HepG2 (cell line): ENCODE measurements at regions of chr1 and their contacts with region 1.

Region 1: GRCh38 chr1:161021165-161021960 is 411 bp upstream of the F11R start:
- DNase-seq: peak; percentile 88
- ATAC-seq: peak; percentile 91
- H3K4me3 ChIP-seq: peak overlapping the region; percentile 64 to 87 (median 84)
- H3K27ac ChIP-seq: peak overlapping the region; percentile 75
- H3K4me1 ChIP-seq: peaks cover 51% of the 10 kb centered on the region
- H3K27me3 ChIP-seq: no peaks in the 10 kb centered on the region; a peak in 1 of 5 replicates
- CTCF ChIP-seq: no peak
- EP300 ChIP-seq: no peak
- POLR2A ChIP-seq: peak; percentile 54 to 79
- RAD21 ChIP-seq: no peak

Region 2: GRCh38 chr1:160884579-160884978 is 136.8 kb before region 1 on chr1:
- CTCF ChIA-PET with region 1: no interaction called
- POLR2A ChIA-PET with region 1: no interaction called
- in situ Hi-C with region 1: no loop called
- intact Hi-C with region 1: no loop called
- DNase-seq: peak; percentile 15
- ATAC-seq: peak; percentile 85
- H3K4me3 ChIP-seq: no peak overlapping the region
- H3K27ac ChIP-seq: no peak overlapping the region
- H3K4me1 ChIP-seq: no peaks in the 10 kb centered on the region
- H3K27me3 ChIP-seq: no peaks in the 10 kb centered on the region; a peak in 2 of 5 replicates
- CTCF ChIP-seq: peak; percentile 47
- EP300 ChIP-seq: no peak
- POLR2A ChIP-seq: no peak
- RAD21 ChIP-seq: no peak

Region 3: DNA sequence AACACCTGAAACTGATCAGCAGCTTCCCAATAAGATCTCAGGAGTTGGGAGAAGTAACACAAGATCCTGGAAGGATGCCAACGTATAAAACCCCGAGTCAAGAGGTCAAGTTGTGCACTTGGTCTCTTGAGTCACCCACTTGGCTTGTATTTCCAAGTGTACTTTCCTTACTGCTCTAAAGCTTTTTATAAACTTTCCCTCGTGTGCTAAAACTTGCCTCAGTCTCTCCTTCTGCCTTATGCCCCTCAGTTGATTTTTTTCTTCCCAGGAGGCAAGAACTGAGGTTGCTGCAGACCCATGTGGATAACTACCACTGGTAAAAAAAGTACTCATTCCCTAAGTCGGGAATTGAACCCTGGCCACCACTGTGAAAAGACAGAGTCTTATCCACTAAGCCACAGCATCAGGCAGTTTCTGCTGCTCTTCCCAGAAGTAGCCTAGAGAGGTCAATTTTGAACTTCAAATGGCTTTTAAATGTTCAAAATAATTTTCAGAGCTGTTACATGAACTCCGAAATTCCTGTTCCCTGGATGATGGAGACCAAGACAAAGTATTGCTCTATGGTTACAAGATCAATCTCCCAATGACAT is 95.6 kb before region 1 on chr1:
- CTCF ChIA-PET with region 1: no interaction called
- POLR2A ChIA-PET with region 1: no interaction called
- in situ Hi-C with region 1: no loop called
- intact Hi-C with region 1: no loop called
- DNase-seq: no peak
- ATAC-seq: no peak
- H3K4me3 ChIP-seq: no peak overlapping the region
- H3K27ac ChIP-seq: no peak overlapping the region
- H3K4me1 ChIP-seq: no peaks in the 10 kb centered on the region
- H3K27me3 ChIP-seq: no peaks in the 10 kb centered on the region
- CTCF ChIP-seq: no peak
- EP300 ChIP-seq: no peak
- POLR2A ChIP-seq: no peak
- RAD21 ChIP-seq: no peak

Region 4: GRCh38 chr1:160997323-160998038 is 23.9 kb before region 1 on chr1:
- CTCF ChIA-PET with region 1: interaction called, 4 read pairs
- POLR2A ChIA-PET with region 1: interaction called, 18 read pairs
- in situ Hi-C with region 1: no loop called
- intact Hi-C with region 1: loop called (anchors 1 kb)
- DNase-seq: peak; percentile 61
- ATAC-seq: peak; percentile 95
- H3K4me3 ChIP-seq: no peak overlapping the region
- H3K27ac ChIP-seq: no peak overlapping the region
- H3K4me1 ChIP-seq: peaks cover 11% of the 10 kb centered on the region
- H3K27me3 ChIP-seq: no peaks in the 10 kb centered on the region
- CTCF ChIP-seq: peak; percentile 84
- EP300 ChIP-seq: no peak
- POLR2A ChIP-seq: no peak
- RAD21 ChIP-seq: peak; percentile 49; the same call in 1 of the 2 replicates

Region 5: DNA sequence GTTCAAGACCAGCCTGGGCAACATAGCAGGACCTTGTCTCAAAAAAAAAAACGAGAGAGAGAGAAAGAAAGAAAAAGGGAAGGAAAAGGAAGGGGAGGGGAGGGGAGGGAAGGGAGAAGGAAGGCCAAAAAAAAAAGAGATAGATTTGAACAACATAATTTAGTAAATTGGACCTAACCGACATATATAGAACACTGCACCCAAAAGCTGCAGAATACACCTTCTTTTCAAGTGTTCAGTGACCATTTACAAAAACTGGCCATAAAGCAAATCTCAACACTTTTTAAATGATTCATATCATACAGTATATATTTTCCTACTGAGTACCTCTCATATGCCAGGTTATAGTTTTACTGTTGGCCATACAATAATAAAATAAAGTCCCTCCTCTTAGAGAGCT is 10.5 kb after region 1 on chr1:
- CTCF ChIA-PET with region 1: no interaction called
- POLR2A ChIA-PET with region 1: interaction called, 8 read pairs
- in situ Hi-C with region 1: no loop called
- intact Hi-C with region 1: loop called (anchors 1 kb)
- DNase-seq: no peak
- ATAC-seq: no peak
- H3K4me3 ChIP-seq: no peak overlapping the region
- H3K27ac ChIP-seq: no peak overlapping the region
- H3K4me1 ChIP-seq: peaks cover 13% of the 10 kb centered on the region
- H3K27me3 ChIP-seq: no peaks in the 10 kb centered on the region
- CTCF ChIP-seq: no peak
- EP300 ChIP-seq: no peak
- POLR2A ChIP-seq: no peak
- RAD21 ChIP-seq: no peak